ENCODE measurements at regions of chr4 and their contacts with region 1.

Region 1: GRCh38 chr4:166165829-166166420 is 292.9 kb downstream of the TLL1 start:
- DNase-seq: peak in 2 of 9 experiments; percentile 24 to 45
- ATAC-seq: peak; percentile 46
- H3K4me3 ChIP-seq: no peak overlapping the region
- H3K4me3 Mint-ChIP-seq: no peak overlapping the region
- H3K27ac ChIP-seq: no peak overlapping the region
- H3K27ac Mint-ChIP-seq: no peak overlapping the region
- H3K4me1 ChIP-seq: no peaks in the 10 kb centered on the region
- H3K4me1 Mint-ChIP-seq: no peaks in the 10 kb centered on the region
- H3K27me3 ChIP-seq: no peaks in the 10 kb centered on the region
- H3K27me3 Mint-ChIP-seq: no peaks in the 10 kb centered on the region
- CTCF ChIP-seq: peak; percentile 37

Region 2: GRCh38 chr4:165844161-165844560 is 321.8 kb before region 1 on chr4:
- CTCF ChIA-PET with region 1: no interaction called
- POLR2A ChIA-PET with region 1: no interaction called
- intact Hi-C with region 1: no loop called
- DNase-seq: no peak
- ATAC-seq: no peak
- H3K4me3 ChIP-seq: no peak overlapping the region
- H3K4me3 Mint-ChIP-seq: no peak overlapping the region
- H3K27ac ChIP-seq: no peak overlapping the region
- H3K27ac Mint-ChIP-seq: no peak overlapping the region
- H3K4me1 ChIP-seq: no peaks in the 10 kb centered on the region
- H3K4me1 Mint-ChIP-seq: no peaks in the 10 kb centered on the region
- H3K27me3 ChIP-seq: no peaks in the 10 kb centered on the region
- H3K27me3 Mint-ChIP-seq: no peaks in the 10 kb centered on the region
- CTCF ChIP-seq: no peak

Region 3: GRCh38 chr4:166335256-166335938 is 169.5 kb after region 1 on chr4:
- CTCF ChIA-PET with region 1: no interaction called
- POLR2A ChIA-PET with region 1: no interaction called
- intact Hi-C with region 1: no loop called
- DNase-seq: no peak
- ATAC-seq: no peak
- H3K4me3 ChIP-seq: no peak overlapping the region
- H3K4me3 Mint-ChIP-seq: no peak overlapping the region
- H3K27ac ChIP-seq: no peak overlapping the region
- H3K27ac Mint-ChIP-seq: no peak overlapping the region
- H3K4me1 ChIP-seq: no peaks in the 10 kb centered on the region
- H3K4me1 Mint-ChIP-seq: no peaks in the 10 kb centered on the region
- H3K27me3 ChIP-seq: no peaks in the 10 kb centered on the region
- H3K27me3 Mint-ChIP-seq: no peaks in the 10 kb centered on the region
- CTCF ChIP-seq: no peak

Region 4: DNA sequence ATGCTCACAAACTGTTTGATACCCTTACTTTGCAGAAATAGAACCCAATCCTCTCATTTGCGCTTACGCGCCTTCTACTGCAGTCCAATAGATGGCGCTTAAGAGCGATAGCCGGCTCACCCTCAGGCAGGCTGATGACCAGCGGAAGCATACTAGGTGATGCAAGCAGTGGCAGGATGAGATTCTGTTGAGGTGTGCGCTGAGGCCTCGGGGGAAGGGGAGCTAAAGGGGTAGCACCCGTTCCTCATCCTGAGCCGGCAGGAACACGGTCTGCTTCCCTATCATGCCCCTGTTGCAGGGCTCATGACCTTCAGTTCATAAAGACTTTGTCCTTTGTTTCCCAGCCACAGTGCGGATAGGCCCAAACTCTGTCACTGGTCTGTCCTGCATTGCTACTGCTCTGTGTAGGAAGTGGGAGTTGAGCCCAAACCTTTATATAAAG is 336.0 kb after region 1 on chr4:
- CTCF ChIA-PET with region 1: no interaction called
- POLR2A ChIA-PET with region 1: no interaction called
- intact Hi-C with region 1: no loop called
- DNase-seq: no peak
- ATAC-seq: no peak
- H3K4me3 ChIP-seq: no peak overlapping the region
- H3K4me3 Mint-ChIP-seq: no peak overlapping the region
- H3K27ac ChIP-seq: no peak overlapping the region
- H3K27ac Mint-ChIP-seq: no peak overlapping the region
- H3K4me1 ChIP-seq: no peaks in the 10 kb centered on the region
- H3K4me1 Mint-ChIP-seq: no peaks in the 10 kb centered on the region
- H3K27me3 ChIP-seq: no peaks in the 10 kb centered on the region
- H3K27me3 Mint-ChIP-seq: no peaks in the 10 kb centered on the region
- CTCF ChIP-seq: no peak

Region 5: GRCh38 chr4:166913926-166914325 is 748.0 kb after region 1 on chr4:
- CTCF ChIA-PET with region 1: no interaction called
- POLR2A ChIA-PET with region 1: no interaction called
- intact Hi-C with region 1: no loop called
- DNase-seq: no peak
- ATAC-seq: no peak
- H3K4me3 ChIP-seq: no peak overlapping the region
- H3K4me3 Mint-ChIP-seq: no peak overlapping the region
- H3K27ac ChIP-seq: no peak overlapping the region
- H3K27ac Mint-ChIP-seq: no peak overlapping the region
- H3K4me1 ChIP-seq: no peaks in the 10 kb centered on the region
- H3K4me1 Mint-ChIP-seq: no peaks in the 10 kb centered on the region
- H3K27me3 ChIP-seq: no peaks in the 10 kb centered on the region
- H3K27me3 Mint-ChIP-seq: no peaks in the 10 kb centered on the region
- CTCF ChIP-seq: no peak

Region 6: DNA sequence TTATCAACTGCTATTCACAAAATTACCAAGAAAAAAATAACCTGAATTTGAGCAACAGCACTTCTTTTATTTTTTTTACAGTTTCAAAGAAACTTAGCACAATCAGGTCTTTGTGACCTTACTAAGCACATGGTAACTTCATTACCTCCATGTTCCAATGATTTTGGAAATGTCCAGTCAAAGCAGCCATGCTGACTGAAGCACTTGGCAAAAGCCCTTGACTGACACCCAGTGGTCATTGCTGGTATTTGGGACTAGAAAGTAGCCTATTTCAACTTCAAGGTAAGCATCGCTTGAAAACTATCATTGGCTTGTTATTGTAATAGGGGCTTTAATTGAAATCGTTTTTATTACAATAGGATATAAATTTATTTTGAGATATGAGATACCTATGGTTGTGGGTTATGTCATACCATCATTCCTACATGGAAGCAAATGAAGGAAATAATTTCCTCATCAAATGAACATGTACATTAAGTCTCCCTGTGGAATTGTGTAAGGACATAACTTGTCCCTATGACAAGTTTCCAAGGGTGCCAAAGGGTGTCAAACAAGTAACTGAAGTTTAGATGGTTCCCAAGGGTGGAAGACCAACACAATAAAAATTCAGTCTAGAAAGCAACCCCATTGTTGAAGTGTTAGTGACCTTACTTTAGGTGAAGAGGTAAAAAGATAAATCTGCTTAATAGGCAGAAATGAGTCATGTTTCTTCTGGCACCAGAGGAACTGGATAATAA is 1911.2 kb after region 1 on chr4:
- CTCF ChIA-PET with region 1: no interaction called
- POLR2A ChIA-PET with region 1: no interaction called
- intact Hi-C with region 1: loop called in 1 of 2 experiments (anchors 5 kb)
- DNase-seq: peak in 5 of 9 experiments; percentile 7 to 26 (median 13)
- ATAC-seq: no peak
- H3K4me3 ChIP-seq: no peak overlapping the region
- H3K4me3 Mint-ChIP-seq: no peak overlapping the region
- H3K27ac ChIP-seq: no peak overlapping the region
- H3K27ac Mint-ChIP-seq: no peak overlapping the region
- H3K4me1 ChIP-seq: no peaks in the 10 kb centered on the region
- H3K4me1 Mint-ChIP-seq: no peaks in the 10 kb centered on the region
- H3K27me3 ChIP-seq: no peaks in the 10 kb centered on the region
- H3K27me3 Mint-ChIP-seq: no peaks in the 10 kb centered on the region
- CTCF ChIP-seq: peak; percentile 48

Measured in CD8-positive, alpha-beta T cell (primary cell).